Caco-2 (cell line): ENCODE measurements at regions of chr20 and their contacts with region 1.

Region 1: DNA sequence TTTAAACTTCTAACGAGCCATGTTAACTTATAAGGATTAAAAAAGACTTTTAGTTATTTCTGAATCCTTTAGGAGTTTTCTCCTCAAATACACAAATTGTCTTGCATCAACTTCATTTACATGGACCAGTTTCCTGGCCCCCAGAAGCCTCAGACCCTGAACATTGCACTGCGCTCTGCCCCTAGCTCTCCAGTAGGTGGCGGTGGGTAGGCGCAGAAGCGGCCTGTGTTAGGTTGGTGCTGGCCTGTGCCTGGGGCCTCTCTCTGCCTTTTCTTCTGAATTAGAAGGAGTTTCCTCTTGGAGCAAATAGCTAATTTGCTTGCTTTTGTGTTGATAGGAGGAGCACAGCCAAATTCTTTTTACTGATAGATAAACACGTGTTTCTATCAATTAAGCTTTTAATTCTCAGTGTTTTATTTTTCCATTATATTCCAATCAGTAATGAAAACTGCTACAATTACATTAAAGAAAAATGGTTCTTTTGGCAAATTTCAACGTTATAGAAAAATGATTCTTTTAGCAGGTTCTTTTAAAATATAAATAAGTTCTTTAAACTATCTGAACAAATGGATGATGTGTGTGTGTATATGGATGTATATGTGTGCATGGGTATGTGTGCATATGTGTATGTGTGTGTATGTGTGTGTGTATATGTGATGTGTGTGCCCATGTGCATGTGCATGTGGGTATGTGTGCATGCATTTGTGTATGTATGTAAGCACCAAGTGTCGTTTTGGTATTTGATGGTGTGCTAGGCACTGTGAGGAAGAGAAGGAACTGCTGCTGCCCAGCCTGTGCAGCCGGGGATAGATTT is 44.5 kb downstream of the DTD1 start:
- DNase-seq: peak; percentile 83 to 86
- H3K4me3 ChIP-seq: no peak overlapping the region
- H3K4me3 Mint-ChIP-seq: no peak overlapping the region
- H3K27ac Mint-ChIP-seq: no peak overlapping the region
- H3K4me1 ChIP-seq: peaks cover 51% of the 10 kb centered on the region
- H3K4me1 Mint-ChIP-seq: peaks cover 43% of the 10 kb centered on the region
- H3K27me3 ChIP-seq: no peaks in the 10 kb centered on the region
- H3K27me3 Mint-ChIP-seq: no peaks in the 10 kb centered on the region
- CTCF ChIP-seq: peak; percentile 94 to 99

Region 2: DNA sequence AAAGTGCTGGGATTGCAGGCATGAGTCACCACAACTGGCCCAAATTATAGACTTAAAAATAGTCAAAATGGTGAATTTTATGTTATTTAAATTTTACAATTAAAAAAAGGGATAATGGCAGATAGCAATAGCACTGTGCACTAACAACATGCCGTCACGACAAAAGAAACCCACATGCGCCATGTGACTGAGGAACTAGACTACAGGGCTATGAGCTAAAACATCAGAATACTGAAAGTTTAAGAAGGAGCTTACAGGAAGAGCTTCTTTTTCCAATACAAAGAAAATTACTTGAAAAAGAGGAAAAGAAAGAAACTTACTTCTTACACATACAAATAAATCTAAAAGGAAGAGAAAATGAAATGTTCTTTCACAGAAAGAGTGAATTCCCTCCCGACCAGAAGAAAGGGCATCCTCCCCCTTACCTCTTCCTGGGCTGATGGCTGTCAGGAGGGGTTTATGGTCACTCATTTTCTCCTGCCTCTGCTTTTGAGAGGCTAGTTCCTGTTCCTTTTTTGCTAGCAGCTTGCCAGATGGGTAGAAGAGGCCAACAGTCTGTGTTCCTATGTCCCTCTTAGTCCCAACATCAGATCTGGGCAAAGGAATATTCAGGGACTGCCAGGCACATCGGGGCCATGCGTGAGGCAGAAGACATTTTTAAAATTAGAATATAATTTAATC is 220.0 kb before region 1 on chr20:
- CTCF ChIA-PET with region 1: no interaction called
- POLR2A ChIA-PET with region 1: no interaction called
- intact Hi-C with region 1: loop called (anchors 10 kb)
- DNase-seq: no peak
- H3K4me3 ChIP-seq: peak overlapping the region; percentile 20
- H3K4me3 Mint-ChIP-seq: peak overlapping the region; percentile 70
- H3K27ac Mint-ChIP-seq: peak overlapping the region; percentile 84
- H3K4me1 ChIP-seq: no peaks in the 10 kb centered on the region
- H3K4me1 Mint-ChIP-seq: peaks cover 8% of the 10 kb centered on the region
- H3K27me3 ChIP-seq: no peaks in the 10 kb centered on the region
- H3K27me3 Mint-ChIP-seq: no peaks in the 10 kb centered on the region
- CTCF ChIP-seq: no peak

Region 3: GRCh38 chr20:18666803-18667415 is 34.5 kb after region 1 on chr20:
- CTCF ChIA-PET with region 1: no interaction called
- POLR2A ChIA-PET with region 1: no interaction called
- intact Hi-C with region 1: loop called (anchors 5 kb)
- DNase-seq: no peak
- H3K4me3 ChIP-seq: no peak overlapping the region
- H3K4me3 Mint-ChIP-seq: no peak overlapping the region
- H3K27ac Mint-ChIP-seq: no peak overlapping the region
- H3K4me1 ChIP-seq: peaks cover 4% of the 10 kb centered on the region; the same call in 1 of the 2 replicates
- H3K4me1 Mint-ChIP-seq: no peaks in the 10 kb centered on the region
- H3K27me3 ChIP-seq: no peaks in the 10 kb centered on the region
- H3K27me3 Mint-ChIP-seq: no peaks in the 10 kb centered on the region
- CTCF ChIP-seq: no peak

Region 4: DNA sequence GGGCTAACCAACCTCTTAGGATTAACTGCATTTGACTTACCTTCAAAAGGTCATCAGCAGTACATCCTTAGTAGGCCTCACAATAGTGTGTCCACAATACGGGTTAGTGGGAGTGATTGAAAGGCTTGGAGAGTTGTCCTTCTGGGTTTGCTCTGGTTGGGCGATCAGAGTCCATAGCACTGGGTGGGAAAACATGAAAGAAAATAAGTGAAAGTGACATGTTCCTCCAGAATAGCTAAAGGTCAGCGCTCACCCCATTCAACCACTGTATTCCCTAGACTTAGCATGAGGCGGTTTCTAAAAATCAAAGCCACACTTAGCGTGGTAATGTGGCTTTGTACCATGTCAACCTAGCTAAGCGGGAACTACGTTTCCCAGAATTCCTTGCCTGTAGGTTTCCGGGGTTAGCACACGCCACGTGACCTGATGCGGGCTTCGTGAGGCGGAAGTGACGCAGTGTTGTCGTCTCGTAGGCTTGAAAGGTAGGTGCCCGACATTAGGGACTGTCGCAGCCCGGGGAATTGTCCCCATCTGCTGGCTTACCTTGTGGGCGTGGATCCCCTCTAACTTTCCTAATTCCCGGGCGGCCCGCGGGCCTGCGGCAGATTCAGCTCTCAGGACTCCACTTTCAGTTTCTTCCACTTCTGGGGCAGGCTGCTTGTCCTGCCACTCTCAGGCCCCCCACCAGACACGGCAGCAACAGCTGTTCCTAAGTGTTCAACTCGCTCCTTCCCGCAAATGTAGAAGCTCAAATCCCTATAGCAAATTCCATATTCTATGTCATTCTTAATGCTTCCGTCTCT is 161.4 kb after region 1 on chr20:
- CTCF ChIA-PET with region 1: interaction called, 12 read pairs
- POLR2A ChIA-PET with region 1: no interaction called
- intact Hi-C with region 1: loop called (anchors 1 kb)
- DNase-seq: peak; percentile 87 to 92
- H3K4me3 ChIP-seq: peak overlapping the region; percentile 52
- H3K4me3 Mint-ChIP-seq: peak overlapping the region; percentile 90
- H3K27ac Mint-ChIP-seq: peak overlapping the region; percentile 89
- H3K4me1 ChIP-seq: no peaks in the 10 kb centered on the region
- H3K4me1 Mint-ChIP-seq: peaks cover under 1% of the 10 kb centered on the region
- H3K27me3 ChIP-seq: no peaks in the 10 kb centered on the region
- H3K27me3 Mint-ChIP-seq: peaks cover 6% of the 10 kb centered on the region
- CTCF ChIP-seq: peak in 1 of 2 experiments; percentile 56

Region 5: DNA sequence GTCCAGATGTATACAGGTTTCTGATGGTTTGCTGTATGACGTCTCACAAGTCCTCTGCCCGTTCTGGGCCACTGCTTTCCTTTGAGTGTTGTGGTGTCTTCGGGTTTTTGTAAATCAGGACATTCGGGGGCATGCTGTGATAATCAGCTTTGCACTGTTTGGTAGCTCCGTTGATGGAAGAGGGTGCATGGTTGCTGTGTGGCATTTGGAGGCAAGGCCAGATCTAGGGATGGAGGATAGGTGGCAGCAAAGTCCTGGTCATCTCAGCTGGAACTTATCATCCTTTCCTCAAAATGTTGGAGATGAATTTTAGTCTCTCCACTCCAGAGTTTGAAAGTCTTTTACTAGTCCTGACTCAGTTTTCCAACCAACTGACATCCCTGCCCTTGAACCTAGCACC is 272.2 kb after region 1 on chr20:
- CTCF ChIA-PET with region 1: interaction called, 20 read pairs
- POLR2A ChIA-PET with region 1: no interaction called
- intact Hi-C with region 1: loop called (anchors 1 kb)
- DNase-seq: peak in 1 of 2 experiments; percentile 41
- H3K4me3 ChIP-seq: no peak overlapping the region
- H3K4me3 Mint-ChIP-seq: no peak overlapping the region
- H3K27ac Mint-ChIP-seq: no peak overlapping the region
- H3K4me1 ChIP-seq: no peaks in the 10 kb centered on the region
- H3K4me1 Mint-ChIP-seq: no peaks in the 10 kb centered on the region
- H3K27me3 ChIP-seq: no peaks in the 10 kb centered on the region; the same call in 1 of the 2 replicates
- H3K27me3 Mint-ChIP-seq: peaks cover 4% of the 10 kb centered on the region
- CTCF ChIP-seq: peak in 1 of 2 experiments; percentile 66

Region 6: DNA sequence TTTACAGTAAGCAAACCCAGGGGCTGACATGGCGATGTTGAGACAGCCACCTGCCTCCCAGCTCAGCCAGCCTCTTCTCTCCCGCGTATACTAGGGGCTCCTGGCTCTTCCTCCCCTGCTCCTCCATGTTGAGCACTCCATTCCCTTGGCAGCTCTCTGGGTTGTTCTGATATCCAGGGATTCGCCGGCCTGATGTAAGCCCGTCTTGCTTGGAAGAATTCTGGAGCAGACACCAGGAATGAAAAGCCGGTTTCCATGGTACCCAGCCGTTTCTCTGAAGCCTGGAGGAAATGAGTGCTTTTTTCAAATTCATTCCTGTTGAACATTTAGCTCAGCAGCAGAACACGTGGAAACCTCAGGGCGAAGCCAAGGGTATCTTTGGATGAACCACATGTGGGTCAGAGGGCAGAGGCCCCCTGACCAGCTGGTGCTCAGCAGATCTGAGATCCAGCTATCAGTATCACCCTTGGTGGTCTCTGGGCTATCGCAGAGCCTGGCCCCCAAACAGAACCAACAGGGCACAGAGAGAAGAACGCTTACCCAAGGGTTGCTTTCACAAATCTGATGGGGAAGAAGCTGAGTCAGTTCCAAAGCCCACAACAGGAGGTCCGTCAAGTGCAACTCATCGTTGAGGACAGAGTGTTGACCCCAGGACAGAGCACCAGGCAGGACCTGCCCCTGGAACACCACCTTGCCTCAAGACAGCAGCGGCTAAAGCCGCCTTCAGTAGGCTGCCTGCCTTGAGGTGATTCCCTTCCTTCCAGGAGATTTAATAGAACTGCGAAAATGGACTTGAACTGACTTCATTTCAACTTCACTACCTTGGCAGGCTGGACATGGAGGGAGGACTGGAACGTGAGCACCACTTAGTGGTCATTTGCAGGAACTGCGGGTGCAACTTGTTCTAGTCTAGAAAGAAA is 1029.6 kb after region 1 on chr20:
- CTCF ChIA-PET with region 1: no interaction called
- POLR2A ChIA-PET with region 1: no interaction called
- intact Hi-C with region 1: loop called (anchors 5 kb)
- DNase-seq: peak; percentile 67 to 72
- H3K4me3 ChIP-seq: no peak overlapping the region
- H3K4me3 Mint-ChIP-seq: no peak overlapping the region
- H3K27ac Mint-ChIP-seq: no peak overlapping the region
- H3K4me1 ChIP-seq: no peaks in the 10 kb centered on the region
- H3K4me1 Mint-ChIP-seq: peaks cover 10% of the 10 kb centered on the region
- H3K27me3 ChIP-seq: 0 out of 2 replicates have a peak, but pooled peaks cover 3% of the 10 kb centered on the region
- H3K27me3 Mint-ChIP-seq: peaks cover 27% of the 10 kb centered on the region
- CTCF ChIP-seq: peak; percentile 91 to 94